ENCODE measurements at regions of chr19 and their contacts with region 1.

Region 1: DNA sequence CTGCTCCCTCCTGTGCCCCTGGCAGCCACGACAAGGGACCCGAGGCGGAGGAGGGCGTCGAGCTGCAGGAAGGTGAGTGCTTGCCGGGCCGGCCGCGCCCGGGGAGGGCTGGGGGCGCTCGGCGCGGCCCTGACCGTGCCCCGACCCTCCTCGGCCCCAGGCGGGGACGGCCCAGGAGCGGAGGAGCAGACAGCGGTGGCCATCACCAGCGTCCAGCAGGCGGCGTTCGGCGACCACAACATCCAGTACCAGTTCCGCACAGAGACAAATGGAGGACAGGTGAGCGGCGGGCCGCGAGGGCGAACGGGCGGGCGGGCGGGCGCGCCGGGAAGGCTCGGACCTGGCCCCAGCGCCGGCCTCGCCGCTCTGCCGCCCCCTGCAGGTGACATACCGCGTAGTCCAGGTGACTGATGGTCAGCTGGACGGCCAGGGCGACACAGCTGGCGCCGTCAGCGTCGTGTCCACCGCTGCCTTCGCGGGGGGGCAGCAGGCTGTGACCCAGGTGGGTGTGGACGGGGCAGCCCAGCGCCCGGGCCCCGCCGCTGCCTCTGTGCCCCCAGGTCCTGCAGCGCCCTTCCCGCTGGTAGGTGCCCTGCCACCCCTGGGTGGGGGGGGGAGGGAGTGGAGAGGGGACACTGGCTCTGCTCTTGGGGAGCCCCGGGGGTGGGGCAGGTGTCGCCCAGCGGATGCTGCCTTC is 807 bp downstream of the USF2 start:
- DNase-seq: peak; percentile 82 to 96 (median 95)
- ATAC-seq: peak; percentile 49 to 53
- H3K4me3 ChIP-seq: peak overlapping the region; percentile 98
- H3K27ac ChIP-seq: peak overlapping the region; percentile 89
- H3K4me1 ChIP-seq: peaks cover 2% of the 10 kb centered on the region
- H3K27me3 ChIP-seq: no peaks in the 10 kb centered on the region

Region 2: DNA sequence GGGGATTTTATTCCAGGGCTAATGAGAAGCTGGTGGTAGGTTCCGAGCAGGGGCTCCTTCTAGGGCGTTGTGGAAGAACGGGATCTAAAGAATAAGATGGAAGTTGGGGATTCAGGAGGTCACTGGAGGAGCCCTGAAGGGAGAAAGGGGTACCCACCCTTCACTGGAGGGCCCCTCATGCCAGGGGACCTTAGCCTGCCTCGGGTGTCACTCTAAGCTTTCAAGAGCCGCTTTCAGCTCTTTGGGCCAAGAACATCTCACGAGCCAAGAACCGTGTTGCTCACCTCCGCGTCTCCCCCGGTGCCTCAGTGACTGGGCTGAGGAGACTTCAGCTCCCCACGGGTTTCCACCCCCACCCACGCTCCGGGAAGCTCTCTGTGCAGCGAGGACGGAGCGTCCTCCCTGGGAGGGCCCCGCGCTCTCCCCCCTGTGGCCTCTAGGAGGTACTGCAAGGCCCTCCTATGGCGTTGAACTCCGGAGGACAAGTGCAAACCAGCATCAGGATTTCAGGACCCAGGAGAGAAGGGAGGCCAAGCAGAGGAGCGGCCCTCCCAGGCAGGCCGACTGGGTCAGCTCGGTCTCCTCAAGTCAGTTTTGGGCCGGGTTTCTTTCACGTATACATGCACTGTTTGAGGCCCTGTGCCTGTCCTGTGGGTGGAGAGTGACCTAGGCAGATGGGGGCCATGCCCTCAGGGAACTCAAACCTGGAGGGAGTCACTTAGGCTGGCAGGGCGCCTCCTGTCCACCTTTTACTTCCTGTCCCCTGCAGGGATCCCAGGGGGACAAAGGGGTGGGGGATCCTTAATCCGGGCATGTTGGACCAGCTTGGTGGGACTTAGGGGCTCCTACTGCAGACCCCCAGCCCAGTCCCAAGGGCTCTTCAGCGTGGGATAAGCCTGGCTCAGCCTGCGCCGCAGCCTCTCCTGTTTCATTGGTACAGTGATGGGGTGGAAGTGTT is 225.8 kb after region 1 on chr19:
- intact Hi-C with region 1: loop called in 1 of 4 experiments (anchors 10 kb)
- DNase-seq: peak; percentile 61 to 82 (median 82)
- ATAC-seq: peak; percentile 85 to 90
- H3K4me3 ChIP-seq: no peak overlapping the region
- H3K27ac ChIP-seq: no peak overlapping the region
- H3K4me1 ChIP-seq: no peaks in the 10 kb centered on the region
- H3K27me3 ChIP-seq: no peaks in the 10 kb centered on the region